SK-N-SH (cell line): ENCODE measurements at regions of chr7 and their contacts with region 1.

Region 1: GRCh38 chr7:140726281-140726680 is 29.8 kb downstream of the NDUFB2 start:
- DNase-seq: peak; percentile 38
- H3K4me3 ChIP-seq: no peak overlapping the region
- H3K27ac ChIP-seq: no peak overlapping the region
- H3K4me1 ChIP-seq: peaks cover 0 to 9% of the 10 kb centered on the region in 2 experiments; a peak in 2 of 4 replicates
- H3K27me3 ChIP-seq: no peaks in the 10 kb centered on the region
- CTCF ChIP-seq: peak; percentile 63
- EP300 ChIP-seq: no peak
- RAD21 ChIP-seq: peak; percentile 63

Region 2: GRCh38 chr7:140275069-140275965 is 451.0 kb before region 1 on chr7:
- CTCF ChIA-PET with region 1: no interaction called
- POLR2A ChIA-PET with region 1: no interaction called
- DNase-seq: no peak
- H3K4me3 ChIP-seq: no peak overlapping the region
- H3K27ac ChIP-seq: no peak overlapping the region
- H3K4me1 ChIP-seq: no peaks in the 10 kb centered on the region; a peak in 1 of 4 replicates
- H3K27me3 ChIP-seq: peaks cover 21% of the 10 kb centered on the region; the same call in 1 of the 2 replicates
- CTCF ChIP-seq: no peak
- EP300 ChIP-seq: no peak
- RAD21 ChIP-seq: no peak

Region 3: GRCh38 chr7:140714331-140715040 is 11.8 kb before region 1 on chr7:
- CTCF ChIA-PET with region 1: interaction called, 19 read pairs
- POLR2A ChIA-PET with region 1: no interaction called
- DNase-seq: no peak
- H3K4me3 ChIP-seq: no peak overlapping the region
- H3K27ac ChIP-seq: no peak overlapping the region
- H3K4me1 ChIP-seq: no peaks in the 10 kb centered on the region
- H3K27me3 ChIP-seq: no peaks in the 10 kb centered on the region
- CTCF ChIP-seq: no peak
- EP300 ChIP-seq: no peak
- RAD21 ChIP-seq: no peak

Region 4: DNA sequence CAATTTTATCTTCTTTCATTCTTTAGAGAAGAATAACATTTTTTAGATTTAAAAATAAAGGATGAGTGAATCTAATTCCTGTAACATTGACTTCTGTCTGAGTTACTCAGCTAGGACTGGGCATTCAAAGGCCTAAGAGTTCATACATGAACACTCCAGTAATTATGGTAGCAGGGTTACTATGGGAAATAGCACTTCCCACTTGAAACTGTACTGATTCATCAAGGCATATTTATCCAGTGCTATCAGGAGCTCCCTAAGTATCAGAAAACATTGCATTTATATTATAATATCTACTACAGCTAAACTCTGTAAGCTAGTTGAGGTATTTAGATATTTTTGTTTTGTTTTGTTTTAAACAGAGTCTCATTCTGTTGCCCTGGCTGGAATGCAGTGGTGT is 12.0 kb after region 1 on chr7:
- CTCF ChIA-PET with region 1: interaction called, 10 read pairs
- POLR2A ChIA-PET with region 1: no interaction called
- DNase-seq: no peak
- H3K4me3 ChIP-seq: no peak overlapping the region
- H3K27ac ChIP-seq: no peak overlapping the region
- H3K4me1 ChIP-seq: no peaks in the 10 kb centered on the region
- H3K27me3 ChIP-seq: no peaks in the 10 kb centered on the region
- CTCF ChIP-seq: no peak
- EP300 ChIP-seq: no peak
- RAD21 ChIP-seq: no peak